Head of caudate nucleus (tissue), 42 donors: ENCODE measurements at regions of chr7 and their contacts with region 1.

Region 1: DNA sequence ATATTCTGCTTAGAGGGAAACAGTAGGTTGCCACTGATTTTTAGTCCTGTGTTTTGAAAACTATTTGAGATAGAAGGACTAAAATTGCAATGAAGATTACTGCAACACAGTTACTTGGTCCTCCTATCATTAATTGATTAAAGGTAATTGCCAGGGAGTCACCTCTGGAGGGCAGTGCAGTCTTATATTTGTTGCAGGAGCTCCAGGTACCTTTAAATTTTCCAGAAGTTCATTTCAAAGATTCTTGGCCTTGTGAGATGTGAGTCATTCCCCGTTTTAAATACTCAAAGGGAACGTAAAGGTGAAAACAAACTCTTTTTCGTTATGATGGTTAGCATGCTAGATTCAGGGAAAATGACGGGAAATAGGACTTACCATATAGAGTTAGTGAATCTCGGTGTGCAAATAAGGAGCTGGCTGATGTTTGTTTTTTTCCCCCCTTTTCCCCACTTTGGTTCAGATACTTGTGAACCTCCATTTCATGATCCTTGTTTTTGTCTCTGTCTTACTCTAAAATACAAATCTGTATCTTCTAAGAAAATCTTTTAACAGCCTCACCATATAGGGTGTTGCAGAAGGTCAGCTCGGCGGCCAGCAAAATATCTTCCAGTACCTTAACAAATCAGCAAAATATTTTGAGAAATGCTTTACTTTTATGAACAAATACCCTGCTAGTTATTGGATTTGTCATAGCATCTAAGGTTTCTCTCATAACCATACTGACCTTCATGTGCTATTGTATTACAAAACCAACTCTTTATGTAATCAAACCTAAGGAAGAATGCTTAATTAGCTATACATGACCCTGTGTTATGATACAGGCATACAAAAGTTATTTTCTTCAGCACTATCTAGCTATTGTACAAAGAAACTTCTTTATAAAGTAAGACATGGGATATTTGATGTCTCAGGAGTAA is 143.0 kb upstream of the HDAC9 start:
- DNase-seq: peak in 40 of 42 donors; percentile 6 to 84 (median 61)

Region 2: GRCh38 chr7:18570890-18571478 is 218.4 kb after region 1 on chr7:
- intact Hi-C with region 1: loop called (anchors 10 kb)
- DNase-seq: peak in 14 of 42 donors; percentile 19 to 68 (median 44)

Region 3: DNA sequence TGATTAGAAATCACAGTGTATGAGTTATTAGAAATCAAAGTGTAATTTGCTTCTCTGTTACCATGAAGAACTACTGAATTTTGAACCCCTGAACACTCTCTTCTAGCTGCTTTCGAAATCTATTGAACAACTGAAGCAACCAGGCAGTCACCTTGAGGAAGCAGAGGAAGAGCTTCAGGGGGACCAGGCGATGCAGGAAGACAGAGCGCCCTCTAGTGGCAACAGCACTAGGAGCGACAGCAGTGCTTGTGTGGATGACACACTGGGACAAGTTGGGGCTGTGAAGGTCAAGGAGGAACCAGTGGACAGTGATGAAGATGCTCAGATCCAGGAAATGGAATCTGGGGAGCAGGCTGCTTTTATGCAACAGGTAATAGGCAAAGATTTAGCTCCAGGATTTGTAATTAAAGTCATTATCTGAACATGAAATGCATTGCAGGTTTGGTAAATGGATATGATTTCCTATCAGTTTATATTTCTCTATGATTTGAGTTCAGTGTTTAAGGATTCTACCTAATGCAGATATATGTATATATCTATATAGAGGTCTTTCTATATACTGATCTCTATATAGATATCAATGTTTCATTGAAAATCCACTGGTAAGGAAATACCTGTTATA is 313.6 kb after region 1 on chr7:
- intact Hi-C with region 1: loop called (anchors 5 kb)
- DNase-seq: peak; percentile 68 to 94 (median 85)